Breast epithelium (tissue), 4 donors: ENCODE measurements at regions of chr3 and their contacts with region 1.

Region 1: DNA sequence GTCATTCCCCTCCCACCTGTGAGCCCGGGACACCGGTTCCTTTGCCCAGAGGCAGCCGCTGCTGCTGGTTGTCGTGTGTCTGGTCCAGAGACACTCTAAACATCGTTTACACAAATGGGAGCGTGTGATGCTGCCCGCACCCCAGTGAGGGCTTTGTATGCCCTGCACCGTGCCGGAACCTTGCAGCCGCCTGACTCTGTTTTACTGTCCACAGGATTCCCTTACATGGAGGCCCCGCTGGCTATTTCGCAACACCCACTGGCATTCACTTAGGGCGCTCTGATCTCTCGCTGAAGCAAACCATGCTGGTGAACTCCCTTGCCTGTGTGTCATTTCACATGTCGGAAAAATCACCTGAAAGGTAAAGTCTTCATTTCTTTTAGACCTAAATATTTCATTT is 100.8 kb upstream of the SLC6A6 start:
- DNase-seq: peak; percentile 65 to 85
- H3K4me3 ChIP-seq: no peak overlapping the region
- H3K27ac ChIP-seq: peak overlapping the region; percentile 19 to 67
- H3K4me1 ChIP-seq: peaks cover 3 to 5% of the 10 kb centered on the region in 2 donors
- H3K27me3 ChIP-seq: peaks cover 0 to 6% of the 10 kb centered on the region in 2 donors
- CTCF ChIP-seq: no peak
- POLR2A ChIP-seq: no peak

Region 2: GRCh38 chr3:14391033-14391432 is 89.5 kb after region 1 on chr3:
- intact Hi-C with region 1: loop called (anchors 10 kb)
- DNase-seq: peak in 1 of 2 donors; percentile 69
- H3K4me3 ChIP-seq: no peak overlapping the region
- H3K27ac ChIP-seq: no peak overlapping the region
- H3K4me1 ChIP-seq: no peaks in the 10 kb centered on the region
- H3K27me3 ChIP-seq: no peaks in the 10 kb centered on the region
- CTCF ChIP-seq: no peak
- POLR2A ChIP-seq: no peak